HepG2 (cell line): ENCODE measurements at regions of chr16 and their contacts with region 1.

Region 1: GRCh38 chr16:57781741-57782606 is 20.3 kb downstream of the KIFC3 start:
- DNase-seq: peak; percentile 94
- ATAC-seq: peak; percentile 90
- H3K4me3 ChIP-seq: peak overlapping the region in 1 of 3 experiments; percentile 38; a peak in 3 of 6 replicates
- H3K27ac ChIP-seq: peak overlapping the region; percentile 81
- H3K4me1 ChIP-seq: peaks cover 53% of the 10 kb centered on the region
- H3K27me3 ChIP-seq: no peaks in the 10 kb centered on the region
- CTCF ChIP-seq: peak; percentile 93
- EP300 ChIP-seq: peak; percentile 53 to 82; a peak in 2 of 4 replicates
- POLR2A ChIP-seq: peak; percentile 51 to 72; a peak in 3 of 4 replicates
- RAD21 ChIP-seq: peak; percentile 88

Region 2: DNA sequence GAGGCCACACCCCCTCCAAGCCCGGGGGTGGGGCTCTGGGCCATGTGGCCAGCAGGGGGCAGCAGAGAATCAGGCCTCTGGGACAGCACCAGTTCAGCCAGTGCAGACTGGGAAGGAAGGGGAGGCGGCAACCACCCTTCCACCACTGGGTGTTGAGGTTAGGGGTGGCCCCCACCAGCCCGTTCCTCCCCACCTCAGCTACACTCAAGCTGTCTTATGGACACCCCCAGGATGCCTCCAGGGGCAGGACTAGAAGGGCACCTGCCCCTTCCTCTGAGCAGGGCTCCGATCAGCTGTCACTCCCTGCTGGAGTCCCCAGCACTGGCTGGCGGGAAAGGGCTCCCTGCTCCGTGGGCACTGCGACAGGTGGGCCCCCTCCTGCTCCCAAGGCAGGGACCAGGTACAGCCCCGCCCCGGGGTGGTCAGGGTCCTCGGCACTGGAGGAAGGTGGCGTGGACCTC is 24.6 kb before region 1 on chr16:
- CTCF ChIA-PET with region 1: interaction called, 17 read pairs
- POLR2A ChIA-PET with region 1: interaction called, 14 read pairs
- in situ Hi-C with region 1: no loop called
- intact Hi-C with region 1: loop called (anchors 1 kb)
- DNase-seq: peak; percentile 73
- ATAC-seq: peak; percentile 87
- H3K4me3 ChIP-seq: no peak overlapping the region
- H3K27ac ChIP-seq: peak overlapping the region; percentile 3
- H3K4me1 ChIP-seq: no peaks in the 10 kb centered on the region
- H3K27me3 ChIP-seq: no peaks in the 10 kb centered on the region
- CTCF ChIP-seq: peak; percentile 99
- EP300 ChIP-seq: no peak
- POLR2A ChIP-seq: no peak
- RAD21 ChIP-seq: peak; percentile 97

Region 3: GRCh38 chr16:57802341-57803133 is 20.6 kb after region 1 on chr16 and contains the start of gene KIFC3:
- CTCF ChIA-PET with region 1: interaction called, 4 read pairs
- POLR2A ChIA-PET with region 1: interaction called, 141 read pairs
- in situ Hi-C with region 1: no loop called
- intact Hi-C with region 1: loop called (anchors 1 kb)
- DNase-seq: peak; percentile 79
- ATAC-seq: peak; percentile 46
- H3K4me3 ChIP-seq: peak within 1 kb of the TSS; percentile 77 to 89 (median 82)
- H3K27ac ChIP-seq: peak within 1 kb of the TSS; percentile 73
- H3K4me1 ChIP-seq: peaks cover 83% of the 10 kb centered on the region
- H3K27me3 ChIP-seq: no peaks in the 10 kb centered on the region
- CTCF ChIP-seq: peak; percentile 50; the same call in 1 of the 2 replicates
- EP300 ChIP-seq: peak; percentile 6 to 42; a peak in 2 of 4 replicates
- POLR2A ChIP-seq: peak in 1 of 2 experiments; percentile 45; a peak in 2 of 4 replicates
- RAD21 ChIP-seq: peak; percentile 89
- total RNA-seq, gene KIFC3: 30.0 and 45.3 TPM in 2 replicates

Region 4: GRCh38 chr16:57826706-57827625 is 45.0 kb after region 1 on chr16:
- CTCF ChIA-PET with region 1: no interaction called
- POLR2A ChIA-PET with region 1: interaction called, 12 read pairs
- in situ Hi-C with region 1: no loop called
- intact Hi-C with region 1: no loop called
- DNase-seq: peak; percentile 94
- ATAC-seq: peak; percentile 93
- H3K4me3 ChIP-seq: peak overlapping the region; percentile 34 to 59 (median 37)
- H3K27ac ChIP-seq: peak overlapping the region; percentile 90
- H3K4me1 ChIP-seq: peaks cover 80% of the 10 kb centered on the region
- H3K27me3 ChIP-seq: no peaks in the 10 kb centered on the region
- CTCF ChIP-seq: peak; percentile 39
- EP300 ChIP-seq: peak; percentile 59 to 76; a peak in 3 of 4 replicates
- POLR2A ChIP-seq: peak; percentile 55 to 79; a peak in 3 of 4 replicates
- RAD21 ChIP-seq: peak; percentile 18; the same call in 1 of the 2 replicates

Region 5: GRCh38 chr16:57863434-57864160 is 81.6 kb after region 1 on chr16:
- CTCF ChIA-PET with region 1: interaction called, 3 read pairs
- POLR2A ChIA-PET with region 1: interaction called, 13 read pairs
- in situ Hi-C with region 1: no loop called
- intact Hi-C with region 1: loop called (anchors 5 kb)
- DNase-seq: peak; percentile 68
- ATAC-seq: peak; percentile 54
- H3K4me3 ChIP-seq: peak overlapping the region in 2 of 3 experiments; percentile 65 to 72; a peak in 2 of 6 replicates
- H3K27ac ChIP-seq: peak overlapping the region; percentile 54
- H3K4me1 ChIP-seq: peaks cover 86% of the 10 kb centered on the region
- H3K27me3 ChIP-seq: no peaks in the 10 kb centered on the region
- CTCF ChIP-seq: peak; percentile 83
- EP300 ChIP-seq: no peak; a peak in 2 of 4 replicates
- POLR2A ChIP-seq: no peak
- RAD21 ChIP-seq: peak; percentile 68

Region 6: DNA sequence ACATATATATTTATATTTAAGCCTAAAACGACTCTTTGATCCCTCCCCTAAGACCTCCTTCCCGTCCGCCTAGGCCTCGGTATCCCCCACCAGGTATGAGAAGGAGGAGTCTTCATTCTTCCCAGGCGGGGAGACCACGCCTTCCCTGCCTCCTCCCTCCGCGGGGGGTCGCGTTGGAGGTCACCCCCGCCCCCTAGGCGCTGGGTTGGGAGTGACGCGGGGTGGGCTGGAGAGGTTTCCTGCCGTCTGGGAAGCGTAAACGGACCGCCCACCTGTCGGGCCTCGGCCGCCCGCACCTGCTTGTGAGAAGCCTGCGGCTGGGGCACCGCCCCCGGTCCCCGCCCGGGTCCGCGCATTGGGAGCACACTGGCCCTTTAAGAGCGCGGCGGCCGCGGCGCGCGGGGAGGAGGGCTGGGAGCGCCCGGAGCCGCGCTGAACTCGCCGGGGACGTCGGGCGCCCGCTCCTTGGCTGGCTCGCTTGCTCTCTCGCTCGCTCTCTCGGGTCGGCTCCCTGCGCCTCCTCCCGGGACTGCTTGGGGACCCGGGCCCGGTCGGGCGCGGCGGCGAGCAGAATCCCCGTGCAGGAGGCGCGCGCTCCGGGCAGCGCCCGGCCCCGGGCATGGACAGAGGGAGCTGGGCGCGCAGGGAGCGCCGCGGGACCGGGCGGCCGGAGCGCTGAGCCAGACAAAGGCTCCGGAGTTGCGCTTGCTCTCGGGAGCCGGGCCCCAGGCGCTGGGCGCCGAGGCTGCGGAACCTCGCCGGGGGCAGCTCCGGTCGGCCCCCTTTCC is 243.6 kb after region 1 on chr16 and contains the start of gene MMP15:
- CTCF ChIA-PET with region 1: no interaction called
- POLR2A ChIA-PET with region 1: interaction called, 11 read pairs
- in situ Hi-C with region 1: no loop called
- intact Hi-C with region 1: no loop called
- DNase-seq: peak; percentile 91
- ATAC-seq: peak; percentile 57
- H3K4me3 ChIP-seq: peak within 1 kb of the TSS; percentile 87 to 97 (median 88)
- H3K27ac ChIP-seq: peak within 1 kb of the TSS; percentile 95
- H3K4me1 ChIP-seq: peaks cover 49% of the 10 kb centered on the region
- H3K27me3 ChIP-seq: no peaks in the 10 kb centered on the region
- CTCF ChIP-seq: peak; percentile 24
- EP300 ChIP-seq: no peak; a peak in 1 of 4 replicates
- POLR2A ChIP-seq: peak; percentile 50 to 91
- RAD21 ChIP-seq: no peak
- total RNA-seq, gene MMP15: 17.2 and 35.2 TPM in 2 replicates